ENCODE measurements at regions of chr2 and their contacts with region 1.

Region 1: DNA sequence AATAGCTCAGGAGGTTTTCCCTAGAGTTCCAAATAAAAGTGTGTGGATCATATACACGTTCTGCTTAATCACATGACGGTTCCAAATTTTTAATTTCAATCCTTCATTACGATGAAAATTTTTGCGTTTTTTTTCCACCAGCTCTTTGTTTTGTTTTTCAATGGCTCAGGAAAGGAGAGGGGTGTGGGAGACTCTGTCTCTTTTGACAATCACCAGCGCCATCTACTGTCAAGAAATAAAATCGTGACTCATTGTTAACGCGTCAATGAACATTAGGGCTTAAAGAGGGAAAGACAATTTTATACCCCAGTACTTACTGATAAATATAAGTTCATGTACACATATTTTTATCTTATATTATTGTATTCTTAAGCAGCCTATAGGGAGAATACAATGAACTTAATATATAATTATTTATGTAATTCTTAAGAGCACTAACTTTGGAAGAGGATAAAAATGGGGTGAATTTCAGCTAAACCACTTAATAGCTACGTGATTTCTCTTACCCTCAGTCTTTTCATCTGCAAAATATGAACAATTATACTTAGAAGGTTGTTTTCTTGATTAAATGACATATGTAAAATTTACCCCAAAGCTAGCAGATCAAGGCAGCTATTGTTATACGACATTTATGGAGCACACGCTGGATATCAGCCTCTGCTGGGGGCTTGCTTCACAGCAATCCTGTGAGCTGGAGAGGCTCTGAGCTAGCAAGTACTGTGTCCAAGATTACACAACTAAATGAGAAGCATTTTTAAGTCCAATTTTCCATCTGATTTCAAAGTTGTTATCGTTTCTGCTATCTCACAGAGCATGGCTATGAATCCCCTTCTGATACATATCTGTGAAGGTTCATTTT is 47.4 kb upstream of the RMDN2 start:
- DNase-seq: no peak
- H3K4me3 ChIP-seq: no peak overlapping the region
- H3K27ac ChIP-seq: no peak overlapping the region
- H3K27me3 ChIP-seq: no peaks in the 10 kb centered on the region
- CTCF ChIP-seq: peak; percentile 65

Region 2: GRCh38 chr2:37323781-37324535 is 553.7 kb before region 1 on chr2:
- CTCF ChIA-PET with region 1: interaction called, 11 read pairs
- POLR2A ChIA-PET with region 1: no interaction called
- DNase-seq: no peak
- H3K4me3 ChIP-seq: peak overlapping the region; percentile 79
- H3K27ac ChIP-seq: peak overlapping the region; percentile 43
- H3K27me3 ChIP-seq: no peaks in the 10 kb centered on the region
- CTCF ChIP-seq: no peak

Region 3: GRCh38 chr2:37414470-37414949 is 463.2 kb before region 1 on chr2:
- CTCF ChIA-PET with region 1: interaction called, 174 read pairs
- POLR2A ChIA-PET with region 1: interaction called, 4 read pairs
- DNase-seq: peak; percentile 56
- H3K4me3 ChIP-seq: no peak overlapping the region
- H3K27ac ChIP-seq: no peak overlapping the region
- H3K27me3 ChIP-seq: no peaks in the 10 kb centered on the region
- CTCF ChIP-seq: peak; percentile 94

Region 4: GRCh38 chr2:37623971-37624900 is 253.4 kb before region 1 on chr2:
- CTCF ChIA-PET with region 1: interaction called, 12 read pairs
- POLR2A ChIA-PET with region 1: no interaction called
- DNase-seq: no peak
- H3K4me3 ChIP-seq: no peak overlapping the region
- H3K27ac ChIP-seq: no peak overlapping the region
- H3K27me3 ChIP-seq: no peaks in the 10 kb centered on the region
- CTCF ChIP-seq: no peak

Region 5: DNA sequence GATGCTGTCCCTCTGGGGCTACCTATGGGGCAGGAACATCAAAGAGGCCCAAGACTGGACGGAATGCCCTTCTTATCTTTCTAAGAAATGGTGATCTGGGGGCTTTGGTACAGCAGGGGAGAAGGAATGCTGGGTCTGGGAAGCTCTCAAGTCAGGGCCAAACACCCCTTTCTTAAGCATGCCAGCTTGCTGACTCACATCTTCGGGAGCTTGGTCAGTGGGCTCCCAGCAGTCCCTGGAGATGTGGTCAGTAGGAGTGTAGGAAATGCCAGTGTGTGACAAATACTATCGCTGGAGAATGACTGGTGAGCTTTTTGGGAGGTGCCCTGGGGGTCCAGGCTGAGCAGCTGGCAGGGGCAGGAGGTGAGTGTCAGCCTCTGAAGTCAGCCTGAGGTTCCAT is 101.2 kb before region 1 on chr2:
- CTCF ChIA-PET with region 1: interaction called, 14 read pairs
- POLR2A ChIA-PET with region 1: no interaction called
- DNase-seq: peak; percentile 78
- H3K4me3 ChIP-seq: no peak overlapping the region
- H3K27ac ChIP-seq: peak overlapping the region; percentile 87
- H3K27me3 ChIP-seq: no peaks in the 10 kb centered on the region
- CTCF ChIP-seq: no peak

Region 6: DNA sequence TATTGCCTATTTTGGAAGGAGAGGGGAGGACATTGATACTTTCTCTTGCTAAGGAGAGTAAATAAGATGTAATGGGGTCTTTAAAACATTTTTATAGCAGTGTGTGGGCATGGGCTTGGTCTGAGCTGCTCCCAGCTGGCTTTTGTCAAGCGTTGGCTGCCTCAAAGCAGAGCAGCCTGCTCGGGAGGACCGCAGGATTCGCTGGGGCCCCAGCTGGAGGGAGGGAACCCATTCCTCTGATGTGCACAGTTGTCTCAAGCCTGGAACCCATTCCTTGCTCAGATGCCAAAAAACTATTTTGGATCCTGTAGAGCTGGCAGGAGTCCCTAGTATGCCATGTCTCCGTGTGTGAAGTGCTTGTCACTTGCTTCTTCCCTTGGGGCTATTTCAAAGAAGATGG is 12.0 kb before region 1 on chr2:
- CTCF ChIA-PET with region 1: interaction called, 17 read pairs
- POLR2A ChIA-PET with region 1: no interaction called
- DNase-seq: no peak
- H3K4me3 ChIP-seq: no peak overlapping the region
- H3K27ac ChIP-seq: no peak overlapping the region
- H3K27me3 ChIP-seq: peaks cover 5% of the 10 kb centered on the region
- CTCF ChIP-seq: no peak

Region 7: GRCh38 chr2:38301340-38301968 is 423.8 kb after region 1 on chr2:
- CTCF ChIA-PET with region 1: no interaction called
- POLR2A ChIA-PET with region 1: no interaction called
- DNase-seq: no peak
- H3K4me3 ChIP-seq: no peak overlapping the region
- H3K27ac ChIP-seq: no peak overlapping the region
- H3K27me3 ChIP-seq: no peaks in the 10 kb centered on the region
- CTCF ChIP-seq: no peak